ENCODE measurements at regions of chr4 and their contacts with region 1.

Region 1: GRCh38 chr4:46073778-46074177 is 50.1 kb downstream of the GABRG1 start:
- DNase-seq: no peak
- ATAC-seq: no peak
- H3K4me3 ChIP-seq: no peak overlapping the region
- H3K27ac ChIP-seq: no peak overlapping the region
- H3K4me1 ChIP-seq: no peaks in the 10 kb centered on the region
- H3K27me3 ChIP-seq: no peaks in the 10 kb centered on the region
- CTCF ChIP-seq: no peak
- POLR2A ChIP-seq: no peak
- RAD21 ChIP-seq: no peak

Region 2: DNA sequence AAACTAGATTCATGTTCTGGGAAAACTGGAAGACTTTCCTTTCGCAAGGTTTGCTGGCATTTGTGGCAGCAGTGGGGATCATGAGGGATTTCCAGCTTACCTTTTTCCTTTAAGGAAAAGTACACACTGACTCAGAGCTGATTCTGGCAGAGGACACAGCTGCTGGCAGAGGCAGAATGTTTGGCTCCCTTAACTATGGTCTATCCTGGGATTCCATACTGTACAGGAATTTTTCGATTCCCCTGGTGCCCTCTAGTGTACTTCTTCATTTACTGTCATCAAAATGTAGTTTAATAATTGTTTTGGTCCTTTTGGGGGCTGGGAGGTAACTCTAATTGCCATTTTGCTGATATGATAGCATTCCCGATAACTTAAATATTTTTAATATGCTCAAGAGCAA is 102.7 kb before region 1 on chr4:
- CTCF ChIA-PET with region 1: no interaction called
- POLR2A ChIA-PET with region 1: no interaction called
- dilution Hi-C with region 1: no loop called
- in situ Hi-C with region 1: loop called (anchors 25 kb)
- intact Hi-C with region 1: no loop called
- DNase-seq: no peak
- ATAC-seq: no peak
- H3K4me3 ChIP-seq: no peak overlapping the region
- H3K27ac ChIP-seq: no peak overlapping the region
- H3K4me1 ChIP-seq: no peaks in the 10 kb centered on the region
- H3K27me3 ChIP-seq: no peaks in the 10 kb centered on the region
- CTCF ChIP-seq: no peak
- POLR2A ChIP-seq: no peak
- RAD21 ChIP-seq: no peak

Region 3: DNA sequence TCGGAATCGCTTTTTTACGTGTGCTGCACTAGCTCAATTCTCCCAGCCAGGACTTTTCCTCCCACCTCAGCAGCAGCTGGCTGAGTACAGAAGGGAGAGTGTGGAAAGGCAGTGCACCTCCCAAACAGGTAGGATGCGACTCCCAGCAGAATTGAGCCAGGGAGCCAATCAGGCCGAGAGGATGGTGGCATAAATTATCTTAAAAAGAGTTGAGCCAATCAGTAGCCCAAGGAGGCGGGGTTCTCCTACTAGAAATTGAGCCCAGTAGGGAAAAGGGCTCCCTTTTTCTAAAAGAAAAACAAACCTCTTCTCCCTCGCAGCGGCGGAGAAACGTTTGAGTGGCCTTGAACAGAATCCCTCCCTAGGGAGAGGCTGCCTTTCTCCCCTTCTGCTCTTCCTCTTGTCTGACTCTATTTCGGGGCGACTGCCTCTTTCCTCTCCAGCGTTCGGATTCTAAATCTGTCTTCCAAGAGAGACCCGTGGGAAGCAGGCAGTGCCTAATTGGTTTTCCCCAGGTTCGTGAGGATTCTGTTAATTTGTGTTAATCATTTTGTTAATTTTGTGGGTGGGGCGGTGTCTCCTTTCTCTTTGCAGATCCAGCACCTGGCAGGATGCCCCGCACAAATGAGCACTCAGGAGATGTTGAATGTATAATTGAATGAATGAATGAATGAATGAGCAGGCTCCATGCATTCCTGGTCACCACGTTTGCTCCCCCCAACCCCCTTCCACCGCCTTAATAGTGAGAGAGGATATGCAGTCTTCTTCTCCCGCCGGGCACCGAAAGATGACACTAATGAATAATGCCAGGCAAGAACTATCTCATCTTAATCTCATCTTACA is 50.4 kb after region 1 on chr4 and contains the start of gene GABRG1:
- CTCF ChIA-PET with region 1: no interaction called
- POLR2A ChIA-PET with region 1: no interaction called
- dilution Hi-C with region 1: no loop called
- in situ Hi-C with region 1: no loop called
- intact Hi-C with region 1: loop called (anchors 2 kb)
- DNase-seq: no peak
- ATAC-seq: no peak
- H3K4me3 ChIP-seq: no peak within 1 kb of the TSS
- H3K27ac ChIP-seq: no peak within 1 kb of the TSS
- H3K4me1 ChIP-seq: no peaks in the 10 kb centered on the region
- H3K27me3 ChIP-seq: no peaks in the 10 kb centered on the region
- CTCF ChIP-seq: no peak
- POLR2A ChIP-seq: no peak
- RAD21 ChIP-seq: no peak
- total RNA-seq, gene GABRG1: not detected in 2 replicates